ENCODE measurements at regions of chr12 and their contacts with region 1.

Region 1: GRCh38 chr12:125346362-125346761 is 281.1 kb downstream of the AACS start:
- DNase-seq: peak; percentile 56
- ATAC-seq: peak; percentile 39
- H3K4me3 ChIP-seq: no peak overlapping the region
- H3K4me3 Mint-ChIP-seq: no peak overlapping the region
- H3K27ac ChIP-seq: no peak overlapping the region
- H3K27ac Mint-ChIP-seq: no peak overlapping the region
- H3K4me1 ChIP-seq: peaks cover 0 to 5% of the 10 kb centered on the region in 2 donors
- H3K4me1 Mint-ChIP-seq: peaks cover 11% of the 10 kb centered on the region
- H3K27me3 ChIP-seq: peaks cover 0 to 11% (median 3%) of the 10 kb centered on the region in 4 experiments
- H3K27me3 Mint-ChIP-seq: peaks cover 18% of the 10 kb centered on the region
- CTCF ChIP-seq: no peak

Region 2: DNA sequence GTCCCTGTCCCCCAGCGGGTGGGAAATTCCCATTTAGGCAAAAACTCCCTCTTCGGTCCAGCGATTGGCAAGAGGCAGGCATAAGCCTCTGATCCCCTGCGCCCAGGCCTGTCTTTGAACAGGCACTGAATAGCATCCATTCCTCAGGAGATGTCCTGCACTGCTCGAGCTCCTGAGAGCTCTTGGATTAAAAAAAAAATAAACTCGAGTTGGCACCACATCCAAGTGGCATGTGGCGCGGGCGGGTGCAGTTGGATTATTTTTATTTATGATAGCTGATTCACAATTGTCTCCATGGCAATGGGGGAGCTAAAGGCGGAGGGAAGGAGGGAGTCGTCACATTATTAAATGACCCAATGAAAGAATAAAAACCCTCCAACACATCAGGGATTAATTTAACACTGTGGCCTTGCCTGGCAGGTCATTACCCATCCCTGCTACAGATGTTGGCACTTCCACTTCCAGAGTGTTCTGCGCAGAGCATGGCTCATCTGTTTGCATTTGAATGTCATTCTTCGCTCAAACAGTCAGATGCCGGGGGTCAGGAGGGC is 73.9 kb before region 1 on chr12:
- CTCF ChIA-PET with region 1: no interaction called
- POLR2A ChIA-PET with region 1: no interaction called
- intact Hi-C with region 1: no loop called
- DNase-seq: no peak
- ATAC-seq: no peak
- H3K4me3 ChIP-seq: no peak overlapping the region
- H3K4me3 Mint-ChIP-seq: no peak overlapping the region
- H3K27ac ChIP-seq: no peak overlapping the region
- H3K27ac Mint-ChIP-seq: no peak overlapping the region
- H3K4me1 ChIP-seq: no peaks in the 10 kb centered on the region
- H3K4me1 Mint-ChIP-seq: no peaks in the 10 kb centered on the region
- H3K27me3 ChIP-seq: no peaks in the 10 kb centered on the region
- H3K27me3 Mint-ChIP-seq: peaks cover 10% of the 10 kb centered on the region
- CTCF ChIP-seq: no peak

Region 3: GRCh38 chr12:125470838-125471783 is 124.7 kb after region 1 on chr12:
- CTCF ChIA-PET with region 1: no interaction called
- POLR2A ChIA-PET with region 1: no interaction called
- intact Hi-C with region 1: no loop called
- DNase-seq: no peak
- ATAC-seq: no peak
- H3K4me3 ChIP-seq: no peak overlapping the region
- H3K4me3 Mint-ChIP-seq: no peak overlapping the region
- H3K27ac ChIP-seq: no peak overlapping the region
- H3K27ac Mint-ChIP-seq: no peak overlapping the region
- H3K4me1 ChIP-seq: no peaks in the 10 kb centered on the region
- H3K4me1 Mint-ChIP-seq: no peaks in the 10 kb centered on the region
- H3K27me3 ChIP-seq: peaks cover 0 to 7% (median 0%) of the 10 kb centered on the region in 4 experiments
- H3K27me3 Mint-ChIP-seq: no peaks in the 10 kb centered on the region
- CTCF ChIP-seq: no peak

Region 4: GRCh38 chr12:126747530-126748149 is 1401.3 kb after region 1 on chr12:
- CTCF ChIA-PET with region 1: no interaction called
- POLR2A ChIA-PET with region 1: no interaction called
- intact Hi-C with region 1: loop called (anchors 5 kb)
- DNase-seq: peak; percentile 32
- ATAC-seq: no peak
- H3K4me3 ChIP-seq: no peak overlapping the region
- H3K4me3 Mint-ChIP-seq: no peak overlapping the region
- H3K27ac ChIP-seq: no peak overlapping the region
- H3K27ac Mint-ChIP-seq: no peak overlapping the region
- H3K4me1 ChIP-seq: no peaks in the 10 kb centered on the region
- H3K4me1 Mint-ChIP-seq: no peaks in the 10 kb centered on the region
- H3K27me3 ChIP-seq: no peaks in the 10 kb centered on the region
- H3K27me3 Mint-ChIP-seq: no peaks in the 10 kb centered on the region
- CTCF ChIP-seq: peak; percentile 90

Region 5: GRCh38 chr12:126874427-126875026 is 1528.2 kb after region 1 on chr12:
- CTCF ChIA-PET with region 1: interaction called, 5 read pairs
- POLR2A ChIA-PET with region 1: no interaction called
- intact Hi-C with region 1: loop called (anchors 5 kb)
- DNase-seq: peak; percentile 41
- ATAC-seq: no peak
- H3K4me3 ChIP-seq: no peak overlapping the region
- H3K4me3 Mint-ChIP-seq: no peak overlapping the region
- H3K27ac ChIP-seq: no peak overlapping the region
- H3K27ac Mint-ChIP-seq: no peak overlapping the region
- H3K4me1 ChIP-seq: no peaks in the 10 kb centered on the region
- H3K4me1 Mint-ChIP-seq: no peaks in the 10 kb centered on the region
- H3K27me3 ChIP-seq: no peaks in the 10 kb centered on the region
- H3K27me3 Mint-ChIP-seq: no peaks in the 10 kb centered on the region
- CTCF ChIP-seq: peak; percentile 71